ENCODE measurements at regions of chr6 and their contacts with region 1.

Region 1: GRCh38 chr6:29955783-29956182 is 13.5 kb downstream of the HLA-A start:
- DNase-seq: no peak
- H3K4me3 ChIP-seq: no peak overlapping the region
- H3K27ac ChIP-seq: no peak overlapping the region
- H3K27me3 ChIP-seq: no peaks in the 10 kb centered on the region
- CTCF ChIP-seq: no peak

Region 2: GRCh38 chr6:29797135-29797534 is 158.6 kb before region 1 on chr6:
- intact Hi-C with region 1: loop called in 1 of 2 experiments (anchors 5 kb)
- DNase-seq: no peak
- H3K4me3 ChIP-seq: no peak overlapping the region
- H3K27ac ChIP-seq: no peak overlapping the region
- H3K27me3 ChIP-seq: peaks cover 0 to 26% (median 0%) of the 10 kb centered on the region in 45 donors
- CTCF ChIP-seq: no peak

Region 3: GRCh38 chr6:29887819-29888776 is 67.7 kb before region 1 on chr6:
- intact Hi-C with region 1: loop called in 1 of 2 experiments (anchors 5 kb)
- DNase-seq: peak in 9 of 10 donors; percentile 30 to 65 (median 42)
- H3K4me3 ChIP-seq: peak overlapping the region; percentile 28 to 81 (median 65)
- H3K27ac ChIP-seq: peak overlapping the region in 49 of 59 donors; percentile 11 to 90 (median 70)
- H3K27me3 ChIP-seq: peaks cover 0 to 9% (median 0%) of the 10 kb centered on the region in 45 donors
- CTCF ChIP-seq: peak in 1 of 56 donors; percentile 3

Measured in dorsolateral prefrontal cortex (tissue), 120 donors.